Vagina (tissue), 2 donors: ENCODE measurements at regions of chr4 and their contacts with region 1.

Region 1: DNA sequence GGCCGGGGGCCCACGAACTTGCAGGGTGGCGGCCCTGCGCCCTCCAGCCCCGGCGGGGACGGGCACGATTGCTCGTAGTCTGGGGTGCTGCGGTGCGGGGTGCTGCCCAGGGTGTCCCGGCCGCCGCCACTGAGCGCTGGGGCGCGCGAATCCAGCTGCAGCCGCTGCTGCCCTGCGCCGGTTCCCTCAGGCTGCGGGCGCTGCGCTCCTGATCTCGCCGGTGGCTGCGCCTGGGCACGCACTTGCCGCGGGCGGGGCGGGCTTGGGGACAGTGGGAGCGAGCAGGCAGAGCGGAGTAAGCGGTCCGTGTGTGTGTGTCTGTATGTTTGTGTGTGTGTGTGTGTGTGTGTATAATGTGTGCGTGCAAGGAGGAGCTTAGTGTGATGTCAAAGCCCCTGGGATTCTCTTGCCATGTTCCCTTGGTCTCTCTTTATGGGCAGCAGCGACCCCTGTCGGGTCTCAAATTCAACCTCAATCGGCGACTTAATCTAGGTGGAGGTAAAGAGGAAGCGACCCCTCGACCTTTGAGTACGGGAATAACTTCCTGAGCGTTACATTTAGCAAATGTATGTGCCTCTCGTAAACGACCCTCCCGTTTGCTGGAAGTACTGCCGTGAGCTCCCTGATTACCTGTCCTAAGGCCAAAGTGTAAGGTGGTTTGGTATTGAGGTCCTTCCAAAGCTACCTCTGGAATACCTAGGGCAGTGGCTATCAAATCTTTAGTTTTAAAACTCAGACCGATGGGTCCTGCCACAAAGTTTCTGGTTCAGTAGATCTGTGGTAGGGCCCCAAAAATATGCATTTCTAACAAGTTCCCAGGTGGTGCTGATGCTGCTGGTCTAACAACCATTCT is at the start of gene RNF150:
- DNase-seq: peak in 1 of 2 donors; percentile 92
- H3K4me3 ChIP-seq: peak within 1 kb of the TSS; percentile 81 to 83
- H3K27ac ChIP-seq: peak within 1 kb of the TSS; percentile 87
- H3K4me1 ChIP-seq: peaks cover 7% of the 10 kb centered on the region
- H3K27me3 ChIP-seq: no peaks in the 10 kb centered on the region
- CTCF ChIP-seq: peak; percentile 43 to 82 (median 44)
- POLR2A ChIP-seq: peak in 1 of 2 donors; percentile 45
- total RNA-seq, gene RNF150: 9.1 TPM

Region 2: DNA sequence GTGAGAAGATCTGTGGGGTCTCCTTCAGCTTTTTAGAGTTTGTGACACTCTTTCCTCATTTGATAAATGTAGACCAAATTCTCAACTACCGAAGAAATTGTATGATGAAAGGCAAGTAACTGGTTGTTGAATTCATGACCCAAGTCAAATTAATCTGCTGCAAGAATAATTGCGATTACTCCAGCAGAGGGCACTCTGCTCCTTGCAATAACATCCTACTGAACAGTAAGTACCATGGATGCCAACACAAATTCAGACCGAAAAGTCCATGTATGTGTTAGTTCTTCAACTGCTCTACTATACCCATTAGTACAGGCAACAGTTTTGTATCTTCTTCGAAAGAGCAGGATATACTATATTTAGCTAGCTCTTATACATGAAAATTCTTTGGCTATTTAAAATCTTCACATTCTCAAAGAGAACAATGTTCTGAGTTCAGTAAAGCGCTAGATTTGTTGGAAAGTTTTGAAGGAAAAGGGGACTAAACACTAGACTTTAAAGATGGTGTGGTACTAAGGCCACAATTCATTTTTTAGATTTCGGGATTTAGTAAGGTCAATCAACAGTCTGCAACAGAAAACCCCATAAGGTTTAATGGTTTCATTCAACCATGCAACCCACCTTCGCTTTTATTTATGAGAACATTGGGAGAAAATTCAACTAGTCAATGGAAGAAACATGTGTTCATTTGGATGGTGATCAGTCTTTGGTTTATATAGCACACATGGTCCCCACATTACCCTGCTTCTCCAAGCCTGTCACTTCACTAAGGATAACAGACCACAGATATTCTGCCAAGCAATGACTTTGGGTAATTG is 271.8 kb before region 1 on chr4:
- intact Hi-C with region 1: loop called (anchors 1 kb)
- DNase-seq: no peak
- H3K4me3 ChIP-seq: no peak overlapping the region
- H3K27ac ChIP-seq: no peak overlapping the region
- H3K4me1 ChIP-seq: peaks cover 6% of the 10 kb centered on the region
- H3K27me3 ChIP-seq: no peaks in the 10 kb centered on the region
- CTCF ChIP-seq: peak; percentile 53 to 87 (median 57)
- POLR2A ChIP-seq: no peak

Region 3: GRCh38 chr4:141144207-141144606 is 10.8 kb after region 1 on chr4:
- intact Hi-C with region 1: loop called (anchors 1 kb)
- DNase-seq: no peak
- H3K4me3 ChIP-seq: no peak overlapping the region
- H3K27ac ChIP-seq: no peak overlapping the region
- H3K4me1 ChIP-seq: peaks cover 5% of the 10 kb centered on the region
- H3K27me3 ChIP-seq: no peaks in the 10 kb centered on the region
- CTCF ChIP-seq: no peak
- POLR2A ChIP-seq: no peak

Region 4: GRCh38 chr4:141692081-141692480 is 558.7 kb after region 1 on chr4:
- intact Hi-C with region 1: no loop called
- DNase-seq: no peak
- H3K4me3 ChIP-seq: no peak overlapping the region
- H3K27ac ChIP-seq: no peak overlapping the region
- H3K4me1 ChIP-seq: peaks cover 3% of the 10 kb centered on the region
- H3K27me3 ChIP-seq: no peaks in the 10 kb centered on the region
- CTCF ChIP-seq: no peak
- POLR2A ChIP-seq: no peak